Left lung (tissue), 14 donors: ENCODE measurements at regions of chr17 and their contacts with region 1.

Region 1: GRCh38 chr17:31433091-31433790 is 41.8 kb downstream of the RAB11FIP4 start:
- DNase-seq: no peak
- ATAC-seq: no peak
- H3K4me3 ChIP-seq: no peak overlapping the region
- H3K27ac ChIP-seq: no peak overlapping the region
- H3K4me1 ChIP-seq: peaks cover 0 to 4% of the 10 kb centered on the region in 2 donors
- H3K27me3 ChIP-seq: peaks cover 0 to 55% of the 10 kb centered on the region in 2 donors
- CTCF ChIP-seq: no peak

Region 2: GRCh38 chr17:31524926-31525800 is 91.9 kb after region 1 on chr17:
- intact Hi-C with region 1: loop called in 1 of 2 experiments (anchors 2 kb)
- DNase-seq: peak; percentile 36 to 97 (median 79)
- ATAC-seq: peak; percentile 95
- H3K4me3 ChIP-seq: no peak overlapping the region
- H3K27ac ChIP-seq: no peak overlapping the region
- H3K4me1 ChIP-seq: peaks cover 0 to 6% of the 10 kb centered on the region in 2 donors
- H3K27me3 ChIP-seq: no peaks in the 10 kb centered on the region
- CTCF ChIP-seq: peak; percentile 90 to 95

Region 3: GRCh38 chr17:31858642-31859473 is 425.6 kb after region 1 on chr17 and contains the start of gene COPRS:
- intact Hi-C with region 1: loop called in 1 of 2 experiments (anchors 10 kb)
- DNase-seq: peak; percentile 77 to 97 (median 91)
- ATAC-seq: peak; percentile 94
- H3K4me3 ChIP-seq: peak within 1 kb of the TSS; percentile 64 to 65
- H3K27ac ChIP-seq: peak within 1 kb of the TSS in 1 of 2 donors; percentile 77
- H3K4me1 ChIP-seq: peaks cover 11 to 26% of the 10 kb centered on the region in 2 donors
- H3K27me3 ChIP-seq: no peaks in the 10 kb centered on the region
- CTCF ChIP-seq: no peak
- polyA plus RNA-seq, gene COPRS: 33.0 to 44.0 (median 35.7) TPM